B cell (primary cell): ENCODE measurements at regions of chr7 and their contacts with region 1.

Region 1: GRCh38 chr7:25894902-25895791 is 256.9 kb upstream of the NFE2L3 start:
- DNase-seq: peak; percentile 89
- ATAC-seq: peak; percentile 83
- H3K4me3 ChIP-seq: peak overlapping the region in 3 of 5 experiments; percentile 12 to 27 (median 19)
- H3K4me3 Mint-ChIP-seq: peak overlapping the region; percentile 75
- H3K27ac ChIP-seq: no peak overlapping the region
- H3K27ac Mint-ChIP-seq: peak overlapping the region; percentile 52
- H3K4me1 ChIP-seq: peaks cover 29 to 33% of the 10 kb centered on the region in 2 donors
- H3K4me1 Mint-ChIP-seq: peaks cover 31% of the 10 kb centered on the region
- H3K27me3 ChIP-seq: peaks cover 0 to 56% (median 43%) of the 10 kb centered on the region in 4 experiments
- H3K27me3 Mint-ChIP-seq: peaks cover 63% of the 10 kb centered on the region
- CTCF ChIP-seq: peak; percentile 91

Region 2: DNA sequence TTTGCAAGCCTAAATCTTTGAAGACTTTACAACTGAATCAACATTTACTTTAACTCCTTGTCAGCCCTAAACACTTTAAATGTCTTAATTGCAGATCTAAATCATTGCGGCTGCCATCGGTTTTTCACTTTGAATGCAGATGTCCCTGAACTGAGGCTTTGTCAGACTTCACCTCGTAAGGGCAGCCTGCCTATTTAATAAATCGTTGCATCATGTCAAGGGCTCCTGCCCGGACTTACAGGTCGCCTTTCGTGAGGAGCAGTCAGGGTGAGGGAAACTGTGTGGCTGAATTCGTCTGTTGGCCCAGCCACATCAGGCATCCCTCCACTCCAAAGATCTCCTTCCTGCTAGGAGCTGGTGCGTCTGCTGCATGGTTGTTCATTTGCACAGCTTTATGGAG is 298.7 kb before region 1 on chr7:
- CTCF ChIA-PET with region 1: no interaction called
- POLR2A ChIA-PET with region 1: no interaction called
- intact Hi-C with region 1: no loop called
- DNase-seq: no peak
- ATAC-seq: no peak
- H3K4me3 ChIP-seq: no peak overlapping the region
- H3K4me3 Mint-ChIP-seq: no peak overlapping the region
- H3K27ac ChIP-seq: no peak overlapping the region
- H3K27ac Mint-ChIP-seq: no peak overlapping the region
- H3K4me1 ChIP-seq: no peaks in the 10 kb centered on the region
- H3K4me1 Mint-ChIP-seq: no peaks in the 10 kb centered on the region
- H3K27me3 ChIP-seq: no peaks in the 10 kb centered on the region
- H3K27me3 Mint-ChIP-seq: peaks cover 17% of the 10 kb centered on the region
- CTCF ChIP-seq: no peak

Region 3: DNA sequence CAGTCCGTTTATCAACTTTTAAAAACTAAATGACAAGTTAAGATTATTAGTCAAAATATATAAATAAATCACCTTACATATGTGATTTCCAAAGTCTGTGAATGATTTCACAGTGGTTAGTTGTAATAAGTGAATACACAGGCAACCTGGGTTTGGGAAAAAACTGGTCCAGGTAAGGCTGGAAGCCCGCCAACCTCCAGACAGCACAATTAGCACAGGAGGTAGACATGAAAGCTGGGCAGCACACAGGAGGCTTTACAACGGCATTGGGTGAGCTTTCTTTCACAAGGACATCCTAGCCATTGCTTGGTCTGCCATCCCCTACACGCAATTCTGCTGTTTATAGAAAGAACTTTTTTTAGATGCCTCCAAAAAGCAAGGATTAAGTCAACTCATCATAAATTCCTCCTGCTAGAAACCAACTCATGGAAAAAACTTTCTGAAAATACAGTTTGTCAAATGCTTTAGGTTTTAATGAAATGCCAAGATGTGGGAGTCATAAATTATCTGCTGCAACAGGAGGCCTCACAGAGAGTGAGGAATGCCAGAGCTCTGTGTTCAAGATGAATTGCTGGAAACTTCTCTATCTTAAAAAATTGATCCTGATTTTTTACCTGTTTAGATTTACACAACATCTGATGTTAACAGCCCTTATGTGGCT is 90.0 kb before region 1 on chr7:
- CTCF ChIA-PET with region 1: no interaction called
- POLR2A ChIA-PET with region 1: no interaction called
- intact Hi-C with region 1: no loop called
- DNase-seq: no peak
- ATAC-seq: no peak
- H3K4me3 ChIP-seq: no peak overlapping the region
- H3K4me3 Mint-ChIP-seq: no peak overlapping the region
- H3K27ac ChIP-seq: no peak overlapping the region
- H3K27ac Mint-ChIP-seq: no peak overlapping the region
- H3K4me1 ChIP-seq: no peaks in the 10 kb centered on the region
- H3K4me1 Mint-ChIP-seq: no peaks in the 10 kb centered on the region
- H3K27me3 ChIP-seq: peaks cover 0 to 2% (median 0%) of the 10 kb centered on the region in 4 experiments
- H3K27me3 Mint-ChIP-seq: peaks cover 35% of the 10 kb centered on the region
- CTCF ChIP-seq: no peak

Region 4: GRCh38 chr7:25877802-25878789 is 17.1 kb before region 1 on chr7:
- CTCF ChIA-PET with region 1: interaction called, 11 read pairs
- POLR2A ChIA-PET with region 1: no interaction called
- intact Hi-C with region 1: no loop called
- DNase-seq: peak; percentile 20
- ATAC-seq: no peak
- H3K4me3 ChIP-seq: no peak overlapping the region
- H3K4me3 Mint-ChIP-seq: no peak overlapping the region
- H3K27ac ChIP-seq: no peak overlapping the region
- H3K27ac Mint-ChIP-seq: no peak overlapping the region
- H3K4me1 ChIP-seq: no peaks in the 10 kb centered on the region
- H3K4me1 Mint-ChIP-seq: peaks cover 4% of the 10 kb centered on the region
- H3K27me3 ChIP-seq: peaks cover 0 to 23% (median 11%) of the 10 kb centered on the region in 4 experiments
- H3K27me3 Mint-ChIP-seq: peaks cover 55% of the 10 kb centered on the region
- CTCF ChIP-seq: no peak

Region 5: GRCh38 chr7:25968205-25968993 is 73.3 kb after region 1 on chr7:
- CTCF ChIA-PET with region 1: interaction called, 4 read pairs
- POLR2A ChIA-PET with region 1: interaction called, 3 read pairs
- intact Hi-C with region 1: loop called (anchors 1 kb)
- DNase-seq: peak; percentile 80
- ATAC-seq: peak; percentile 84
- H3K4me3 ChIP-seq: peak overlapping the region in 3 of 5 experiments; percentile 8 to 37 (median 28)
- H3K4me3 Mint-ChIP-seq: peak overlapping the region; percentile 78
- H3K27ac ChIP-seq: peak overlapping the region; percentile 57 to 75
- H3K27ac Mint-ChIP-seq: peak overlapping the region; percentile 83
- H3K4me1 ChIP-seq: peaks cover 30 to 42% of the 10 kb centered on the region in 2 donors
- H3K4me1 Mint-ChIP-seq: peaks cover 39% of the 10 kb centered on the region
- H3K27me3 ChIP-seq: peaks cover 0 to 23% (median 8%) of the 10 kb centered on the region in 4 experiments
- H3K27me3 Mint-ChIP-seq: peaks cover 16% of the 10 kb centered on the region
- CTCF ChIP-seq: no peak

Region 6: DNA sequence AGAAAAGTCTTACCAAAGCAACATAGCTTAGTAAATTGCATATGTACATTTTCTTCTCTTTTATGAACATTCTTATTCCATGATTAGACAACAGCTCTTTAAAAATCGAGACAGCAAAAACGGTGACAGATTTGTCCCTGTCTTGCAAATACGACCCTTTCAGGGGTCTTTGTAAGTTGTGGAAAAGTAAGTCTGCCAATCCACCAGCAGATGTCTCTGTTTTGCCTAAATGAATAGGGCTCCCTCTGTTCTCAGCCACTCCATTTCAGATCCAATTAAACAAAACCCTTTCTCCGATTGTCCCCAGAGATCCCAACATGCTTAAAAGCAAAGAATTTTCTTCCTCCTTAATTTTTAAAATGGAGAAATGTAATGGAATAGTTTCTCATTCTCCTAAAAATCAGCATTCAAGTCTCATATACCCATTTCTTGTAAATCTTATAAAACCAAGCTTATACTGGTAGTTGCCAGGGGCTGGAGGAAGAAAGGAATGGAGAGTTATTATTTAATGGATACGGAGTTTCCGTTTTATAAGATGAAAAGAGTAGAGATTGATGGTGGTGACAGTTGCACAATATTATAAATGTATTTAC is 195.9 kb after region 1 on chr7:
- CTCF ChIA-PET with region 1: interaction called, 35 read pairs
- POLR2A ChIA-PET with region 1: no interaction called
- intact Hi-C with region 1: no loop called
- DNase-seq: peak; percentile 62
- ATAC-seq: peak; percentile 45
- H3K4me3 ChIP-seq: no peak overlapping the region
- H3K4me3 Mint-ChIP-seq: peak overlapping the region; percentile 32
- H3K27ac ChIP-seq: no peak overlapping the region
- H3K27ac Mint-ChIP-seq: peak overlapping the region; percentile 0
- H3K4me1 ChIP-seq: peaks cover 17 to 22% of the 10 kb centered on the region in 2 donors
- H3K4me1 Mint-ChIP-seq: peaks cover 26% of the 10 kb centered on the region
- H3K27me3 ChIP-seq: no peaks in the 10 kb centered on the region
- H3K27me3 Mint-ChIP-seq: no peaks in the 10 kb centered on the region
- CTCF ChIP-seq: peak; percentile 66

Region 7: GRCh38 chr7:26278770-26279169 is 383.6 kb after region 1 on chr7:
- CTCF ChIA-PET with region 1: interaction called, 13 read pairs
- POLR2A ChIA-PET with region 1: no interaction called
- intact Hi-C with region 1: loop called (anchors 5 kb)
- DNase-seq: peak; percentile 66
- ATAC-seq: peak; percentile 64
- H3K4me3 ChIP-seq: no peak overlapping the region
- H3K4me3 Mint-ChIP-seq: no peak overlapping the region
- H3K27ac ChIP-seq: no peak overlapping the region
- H3K27ac Mint-ChIP-seq: no peak overlapping the region
- H3K4me1 ChIP-seq: peaks cover 0 to 3% of the 10 kb centered on the region in 2 donors
- H3K4me1 Mint-ChIP-seq: peaks cover 9% of the 10 kb centered on the region
- H3K27me3 ChIP-seq: no peaks in the 10 kb centered on the region
- H3K27me3 Mint-ChIP-seq: no peaks in the 10 kb centered on the region
- CTCF ChIP-seq: peak; percentile 64

Region 8: GRCh38 chr7:26667500-26668133 is 772.5 kb after region 1 on chr7:
- CTCF ChIA-PET with region 1: interaction called, 34 read pairs
- POLR2A ChIA-PET with region 1: no interaction called
- intact Hi-C with region 1: loop called (anchors 1 kb)
- DNase-seq: peak; percentile 75
- ATAC-seq: peak; percentile 66
- H3K4me3 ChIP-seq: no peak overlapping the region
- H3K4me3 Mint-ChIP-seq: no peak overlapping the region
- H3K27ac ChIP-seq: no peak overlapping the region
- H3K27ac Mint-ChIP-seq: no peak overlapping the region
- H3K4me1 ChIP-seq: peaks cover 0 to 6% of the 10 kb centered on the region in 2 donors
- H3K4me1 Mint-ChIP-seq: peaks cover 18% of the 10 kb centered on the region
- H3K27me3 ChIP-seq: no peaks in the 10 kb centered on the region
- H3K27me3 Mint-ChIP-seq: no peaks in the 10 kb centered on the region
- CTCF ChIP-seq: peak; percentile 77